A673 (cell line): ENCODE measurements at regions of chr11 and their contacts with region 1.

Region 1: GRCh38 chr11:31958076-31958735 is 132.7 kb upstream of the RCN1 start:
- DNase-seq: peak; percentile 93
- H3K4me3 ChIP-seq: no peak overlapping the region
- H3K27ac ChIP-seq: no peak overlapping the region
- H3K4me1 ChIP-seq: no peaks in the 10 kb centered on the region
- H3K27me3 ChIP-seq: no peaks in the 10 kb centered on the region
- CTCF ChIP-seq: peak; percentile 100

Region 2: GRCh38 chr11:31340903-31341572 is 617.2 kb before region 1 on chr11:
- CTCF ChIA-PET with region 1: interaction called, 5 read pairs
- POLR2A ChIA-PET with region 1: no interaction called
- intact Hi-C with region 1: loop called (anchors 2 kb)
- DNase-seq: peak; percentile 80
- H3K4me3 ChIP-seq: no peak overlapping the region
- H3K27ac ChIP-seq: no peak overlapping the region
- H3K4me1 ChIP-seq: no peaks in the 10 kb centered on the region
- H3K27me3 ChIP-seq: peaks cover 71% of the 10 kb centered on the region
- CTCF ChIP-seq: peak; percentile 99

Region 3: GRCh38 chr11:31487848-31488247 is 470.4 kb before region 1 on chr11:
- CTCF ChIA-PET with region 1: interaction called, 6 read pairs
- POLR2A ChIA-PET with region 1: no interaction called
- intact Hi-C with region 1: loop called (anchors 1 kb)
- DNase-seq: peak; percentile 91
- H3K4me3 ChIP-seq: no peak overlapping the region
- H3K27ac ChIP-seq: no peak overlapping the region
- H3K4me1 ChIP-seq: peaks cover 6% of the 10 kb centered on the region
- H3K27me3 ChIP-seq: no peaks in the 10 kb centered on the region
- CTCF ChIP-seq: peak; percentile 92

Region 4: DNA sequence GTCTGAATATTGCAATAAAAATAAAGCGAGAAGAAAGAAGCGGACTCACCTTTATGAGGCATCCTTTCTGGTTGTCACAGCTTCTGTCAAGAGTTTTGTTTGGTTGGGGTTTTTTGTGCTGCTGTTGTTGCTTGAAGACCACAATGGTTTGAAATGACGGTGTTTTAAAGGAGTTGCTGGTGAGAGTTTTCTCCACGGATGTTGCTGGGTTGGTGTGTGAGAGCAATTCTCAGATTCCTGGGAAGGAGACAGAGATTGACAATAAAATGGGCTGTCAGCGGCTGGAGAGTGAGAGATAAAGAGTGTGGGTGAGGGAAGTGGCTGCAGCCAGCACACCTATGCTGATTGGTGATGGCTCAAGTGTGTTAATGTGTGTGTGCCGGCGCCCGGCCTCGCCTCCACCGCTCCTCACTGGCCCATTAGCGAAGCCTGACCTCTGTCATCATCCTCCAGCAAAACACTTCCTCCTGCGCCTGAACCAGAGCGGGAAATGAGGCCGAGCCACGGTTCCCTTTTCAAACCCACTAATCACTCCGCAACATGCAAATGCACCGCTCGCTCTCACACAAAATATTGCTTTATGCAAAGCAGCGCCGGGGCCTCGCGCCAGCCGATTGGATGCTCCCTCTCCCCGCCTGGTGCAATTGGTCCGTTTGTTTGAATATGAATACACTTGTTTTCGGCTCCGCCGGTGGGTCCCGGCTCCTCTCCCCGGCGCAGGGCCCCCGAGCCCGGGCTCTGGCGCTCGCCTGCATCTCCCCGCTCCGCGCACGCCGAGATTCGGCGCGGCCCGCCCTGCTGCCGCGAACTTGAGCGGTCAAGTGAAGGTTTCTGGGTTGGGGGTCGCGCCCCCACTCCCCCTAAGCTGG is 147.2 kb before region 1 on chr11 and contains the start of gene PAX6:
- CTCF ChIA-PET with region 1: no interaction called
- POLR2A ChIA-PET with region 1: no interaction called
- intact Hi-C with region 1: no loop called
- DNase-seq: peak; percentile 100
- H3K4me3 ChIP-seq: peak within 1 kb of the TSS; percentile 60
- H3K27ac ChIP-seq: peak within 1 kb of the TSS; percentile 79
- H3K4me1 ChIP-seq: peaks cover 67% of the 10 kb centered on the region
- H3K27me3 ChIP-seq: peaks cover 94% of the 10 kb centered on the region
- CTCF ChIP-seq: no peak
- total RNA-seq, gene PAX6: 22.4 and 33.9 TPM in 2 replicates

Region 5: DNA sequence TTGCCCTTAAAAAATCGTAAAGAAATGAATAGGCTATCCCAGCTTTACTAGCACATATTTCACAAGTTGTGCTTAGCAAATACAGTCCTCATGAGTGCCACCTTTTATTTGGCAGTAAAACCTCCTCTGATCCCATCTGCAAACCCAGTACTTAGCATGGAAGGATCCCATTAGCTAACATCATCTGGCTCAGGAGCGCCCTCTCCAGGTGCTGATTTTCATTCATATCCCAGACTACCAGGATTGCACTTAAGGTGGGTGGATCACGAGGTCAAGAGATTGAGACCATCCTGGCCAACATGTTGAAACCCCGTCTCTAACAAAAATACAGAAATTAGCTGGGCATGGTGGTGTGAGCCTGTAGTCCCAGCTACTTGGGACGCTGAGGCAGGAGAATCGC is 71.0 kb before region 1 on chr11:
- CTCF ChIA-PET with region 1: interaction called, 14 read pairs
- POLR2A ChIA-PET with region 1: no interaction called
- intact Hi-C with region 1: no loop called
- DNase-seq: peak; percentile 72
- H3K4me3 ChIP-seq: no peak overlapping the region
- H3K27ac ChIP-seq: no peak overlapping the region
- H3K4me1 ChIP-seq: peaks cover 2% of the 10 kb centered on the region
- H3K27me3 ChIP-seq: peaks cover 61% of the 10 kb centered on the region
- CTCF ChIP-seq: peak; percentile 93

Region 6: DNA sequence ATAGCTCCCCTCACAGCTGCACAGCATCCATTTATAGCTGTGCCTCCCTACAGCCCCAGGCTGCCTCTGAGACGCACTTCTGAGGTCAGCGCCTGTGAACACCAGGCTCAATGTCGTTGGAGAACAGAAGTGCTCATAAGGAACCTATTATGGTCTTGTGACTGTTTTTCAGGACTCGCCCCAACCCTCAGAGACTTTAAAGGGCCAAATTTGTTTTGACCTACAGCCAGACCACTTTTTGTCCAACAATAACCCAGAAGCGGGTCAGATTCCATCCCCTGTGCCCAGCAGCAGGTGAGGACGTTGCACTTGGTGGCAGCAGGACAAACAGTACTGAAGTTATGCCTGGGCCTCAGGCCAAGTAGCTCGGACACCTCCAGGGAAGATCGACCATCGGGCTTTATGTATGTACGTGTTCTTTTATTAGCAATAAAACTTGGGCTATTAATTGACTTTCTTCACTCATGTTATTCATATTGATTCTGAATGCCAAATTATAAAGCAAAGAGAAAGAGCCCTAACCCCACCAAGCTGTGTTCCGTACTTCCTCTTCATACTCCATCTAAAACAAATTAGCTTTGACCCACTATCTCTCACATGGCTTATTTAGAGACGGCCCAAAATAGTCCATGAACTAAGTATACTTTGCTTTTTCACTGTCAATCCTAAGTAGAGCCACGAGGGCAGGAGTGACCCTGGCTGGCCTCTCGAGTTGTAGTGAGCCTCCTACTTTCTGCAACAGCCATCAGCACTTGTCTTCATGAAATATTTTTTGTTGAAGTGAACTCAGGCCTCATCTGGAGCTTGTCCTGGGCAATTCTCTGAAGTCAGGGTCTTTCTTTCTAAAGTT is 54.8 kb before region 1 on chr11:
- CTCF ChIA-PET with region 1: no interaction called
- POLR2A ChIA-PET with region 1: no interaction called
- intact Hi-C with region 1: no loop called
- DNase-seq: no peak
- H3K4me3 ChIP-seq: no peak overlapping the region
- H3K27ac ChIP-seq: no peak overlapping the region
- H3K4me1 ChIP-seq: no peaks in the 10 kb centered on the region
- H3K27me3 ChIP-seq: peaks cover 36% of the 10 kb centered on the region
- CTCF ChIP-seq: no peak

Region 7: GRCh38 chr11:31974366-31975136 is 16.3 kb after region 1 on chr11:
- CTCF ChIA-PET with region 1: interaction called, 11 read pairs
- POLR2A ChIA-PET with region 1: no interaction called
- intact Hi-C with region 1: no loop called
- DNase-seq: no peak
- H3K4me3 ChIP-seq: no peak overlapping the region
- H3K27ac ChIP-seq: no peak overlapping the region
- H3K4me1 ChIP-seq: no peaks in the 10 kb centered on the region
- H3K27me3 ChIP-seq: peaks cover 86% of the 10 kb centered on the region
- CTCF ChIP-seq: no peak